Naive thymus-derived CD4-positive, alpha-beta T cell (primary cell): ENCODE measurements at regions of chr13 and their contacts with region 1.

Region 1: GRCh38 chr13:79360095-79360494 is 46.0 kb downstream of the RBM26 start:
- DNase-seq: no peak
- ATAC-seq: no peak
- H3K4me3 ChIP-seq: no peak overlapping the region
- H3K4me3 Mint-ChIP-seq: no peak overlapping the region
- H3K27ac ChIP-seq: no peak overlapping the region
- H3K27ac Mint-ChIP-seq: peak overlapping the region in 1 of 9 donors; percentile 34
- H3K4me1 ChIP-seq: no peaks in the 10 kb centered on the region
- H3K4me1 Mint-ChIP-seq: peaks cover 4 to 40% (median 18%) of the 10 kb centered on the region in 7 donors
- H3K27me3 ChIP-seq: no peaks in the 10 kb centered on the region
- H3K27me3 Mint-ChIP-seq: no peaks in the 10 kb centered on the region

Region 2: GRCh38 chr13:79318664-79319063 is 41.4 kb before region 1 on chr13:
- CTCF ChIA-PET with region 1: no interaction called
- POLR2A ChIA-PET with region 1: no interaction called
- intact Hi-C with region 1: loop called in 1 of 2 experiments (anchors 5 kb)
- DNase-seq: no peak
- ATAC-seq: no peak
- H3K4me3 ChIP-seq: no peak overlapping the region
- H3K4me3 Mint-ChIP-seq: no peak overlapping the region
- H3K27ac ChIP-seq: no peak overlapping the region
- H3K27ac Mint-ChIP-seq: peak overlapping the region in 1 of 9 donors; percentile 35
- H3K4me1 ChIP-seq: no peaks in the 10 kb centered on the region
- H3K4me1 Mint-ChIP-seq: peaks cover 0 to 8% (median 4%) of the 10 kb centered on the region in 7 donors
- H3K27me3 ChIP-seq: no peaks in the 10 kb centered on the region
- H3K27me3 Mint-ChIP-seq: no peaks in the 10 kb centered on the region

Region 3: GRCh38 chr13:79336966-79337365 is 23.1 kb before region 1 on chr13:
- CTCF ChIA-PET with region 1: no interaction called
- POLR2A ChIA-PET with region 1: no interaction called
- intact Hi-C with region 1: loop called in 1 of 2 experiments (anchors 2 kb)
- DNase-seq: no peak
- ATAC-seq: peak; percentile 67
- H3K4me3 ChIP-seq: no peak overlapping the region
- H3K4me3 Mint-ChIP-seq: no peak overlapping the region
- H3K27ac ChIP-seq: no peak overlapping the region
- H3K27ac Mint-ChIP-seq: peak overlapping the region in 3 of 9 donors; percentile 28 to 57 (median 37)
- H3K4me1 ChIP-seq: no peaks in the 10 kb centered on the region
- H3K4me1 Mint-ChIP-seq: peaks cover 4 to 10% (median 9%) of the 10 kb centered on the region in 7 donors
- H3K27me3 ChIP-seq: no peaks in the 10 kb centered on the region
- H3K27me3 Mint-ChIP-seq: no peaks in the 10 kb centered on the region

Region 4: GRCh38 chr13:79349011-79349410 is 11.1 kb before region 1 on chr13:
- CTCF ChIA-PET with region 1: interaction called, 3 read pairs
- POLR2A ChIA-PET with region 1: no interaction called
- intact Hi-C with region 1: loop called in 1 of 2 experiments (anchors 2 kb)
- DNase-seq: no peak
- ATAC-seq: no peak
- H3K4me3 ChIP-seq: no peak overlapping the region
- H3K4me3 Mint-ChIP-seq: no peak overlapping the region
- H3K27ac ChIP-seq: no peak overlapping the region
- H3K27ac Mint-ChIP-seq: no peak overlapping the region
- H3K4me1 ChIP-seq: no peaks in the 10 kb centered on the region
- H3K4me1 Mint-ChIP-seq: peaks cover 0 to 17% (median 15%) of the 10 kb centered on the region in 7 donors
- H3K27me3 ChIP-seq: no peaks in the 10 kb centered on the region
- H3K27me3 Mint-ChIP-seq: no peaks in the 10 kb centered on the region

Region 5: GRCh38 chr13:79445968-79446645 is 86.0 kb after region 1 on chr13:
- CTCF ChIA-PET with region 1: no interaction called
- POLR2A ChIA-PET with region 1: no interaction called
- intact Hi-C with region 1: no loop called
- DNase-seq: peak in 5 of 9 donors; percentile 5 to 29 (median 17)
- ATAC-seq: peak; percentile 80
- H3K4me3 ChIP-seq: no peak overlapping the region
- H3K4me3 Mint-ChIP-seq: peak overlapping the region in 1 of 10 donors; percentile 20
- H3K27ac ChIP-seq: no peak overlapping the region
- H3K27ac Mint-ChIP-seq: peak overlapping the region in 5 of 9 donors; percentile 6 to 37 (median 28)
- H3K4me1 ChIP-seq: peaks cover 8 to 18% of the 10 kb centered on the region in 2 donors
- H3K4me1 Mint-ChIP-seq: peaks cover 24 to 46% (median 40%) of the 10 kb centered on the region in 7 donors
- H3K27me3 ChIP-seq: no peaks in the 10 kb centered on the region
- H3K27me3 Mint-ChIP-seq: no peaks in the 10 kb centered on the region